ENCODE measurements at regions of chr3 and their contacts with region 1.

Region 1: GRCh38 chr3:47824541-47825473 is 21.9 kb downstream of the DHX30 start:
- DNase-seq: peak; percentile 57
- H3K4me3 ChIP-seq: peak overlapping the region; percentile 89
- H3K27ac ChIP-seq: peak overlapping the region; percentile 52
- H3K27me3 ChIP-seq: no peaks in the 10 kb centered on the region
- CTCF ChIP-seq: peak; percentile 61

Region 2: GRCh38 chr3:47522082-47522987 is 302.5 kb before region 1 on chr3:
- CTCF ChIA-PET with region 1: interaction called, 12 read pairs
- POLR2A ChIA-PET with region 1: no interaction called
- DNase-seq: peak; percentile 82
- H3K4me3 ChIP-seq: no peak overlapping the region
- H3K27ac ChIP-seq: no peak overlapping the region
- H3K27me3 ChIP-seq: peaks cover 2% of the 10 kb centered on the region
- CTCF ChIP-seq: peak; percentile 91

Region 3: DNA sequence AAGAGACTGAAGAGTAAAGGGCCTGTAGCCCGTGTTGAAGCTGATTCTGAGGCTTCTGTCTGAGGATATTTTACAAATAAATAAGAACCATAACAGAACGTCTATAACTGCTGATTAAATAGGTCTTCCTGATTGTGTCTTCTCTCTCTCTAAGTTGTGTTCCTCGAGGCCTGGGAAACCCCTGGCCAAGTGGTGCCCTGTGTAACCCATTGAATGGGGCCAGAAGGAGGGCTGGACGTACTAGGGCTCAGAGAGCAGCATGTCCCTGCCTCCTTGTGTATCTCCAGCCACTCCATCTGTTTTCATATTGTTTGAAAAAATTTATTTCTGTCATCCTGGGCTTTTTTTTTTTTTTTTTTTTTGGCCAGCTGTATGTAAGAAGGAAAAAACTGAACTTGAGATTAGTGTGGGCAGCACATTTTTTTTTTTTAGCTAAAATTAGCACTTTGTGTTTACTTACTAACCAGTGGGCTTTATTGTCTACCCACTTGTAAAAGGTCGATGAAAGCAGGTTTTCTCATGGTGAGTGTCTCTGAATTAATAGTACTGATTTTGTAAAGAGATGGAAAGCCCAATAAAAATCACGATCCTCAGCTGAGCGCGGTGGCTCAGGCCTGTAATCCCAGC is 11.1 kb before region 1 on chr3:
- CTCF ChIA-PET with region 1: interaction called, 40 read pairs
- POLR2A ChIA-PET with region 1: interaction called, 14 read pairs
- DNase-seq: no peak
- H3K4me3 ChIP-seq: no peak overlapping the region
- H3K27ac ChIP-seq: no peak overlapping the region
- H3K27me3 ChIP-seq: no peaks in the 10 kb centered on the region
- CTCF ChIP-seq: no peak

Region 4: GRCh38 chr3:47964740-47965139 is 139.9 kb after region 1 on chr3:
- CTCF ChIA-PET with region 1: interaction called, 10 read pairs
- POLR2A ChIA-PET with region 1: no interaction called
- DNase-seq: no peak
- H3K4me3 ChIP-seq: no peak overlapping the region
- H3K27ac ChIP-seq: no peak overlapping the region
- H3K27me3 ChIP-seq: no peaks in the 10 kb centered on the region
- CTCF ChIP-seq: no peak

Region 5: DNA sequence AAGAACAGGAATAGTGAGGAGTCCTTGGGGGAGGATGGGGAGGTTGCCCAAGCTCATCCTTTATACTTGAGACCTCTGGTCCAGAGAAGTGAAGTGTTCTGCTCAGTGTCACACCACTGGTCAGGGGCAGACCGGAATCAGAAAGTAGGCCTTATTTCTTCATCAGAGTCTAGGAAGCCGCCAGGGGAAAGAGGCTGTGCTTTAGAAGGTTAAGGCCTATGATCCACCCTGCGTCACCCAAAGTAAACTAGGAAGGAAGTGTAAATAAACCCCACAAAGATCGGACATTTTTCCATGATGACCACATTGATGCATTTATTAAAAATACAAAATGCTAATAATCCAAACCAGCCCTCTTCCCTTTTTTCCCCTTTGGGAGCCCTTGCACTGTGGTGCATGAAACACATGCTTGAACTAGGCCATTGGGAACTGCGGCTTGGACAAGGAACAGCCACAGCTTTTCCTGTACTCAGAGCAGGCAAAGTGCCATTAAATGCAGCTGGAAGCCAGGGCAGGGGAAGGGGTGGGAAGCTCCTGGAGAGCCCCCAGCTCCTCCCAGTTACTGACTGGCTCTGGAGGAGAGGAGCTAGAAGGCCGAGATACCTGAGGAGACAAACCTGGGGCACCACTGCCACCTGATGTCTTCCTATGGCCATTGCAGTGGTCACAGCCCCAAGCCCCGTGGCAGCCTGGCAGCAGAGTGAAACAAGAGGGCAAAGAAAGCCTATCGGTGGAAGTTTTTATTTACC is 326.4 kb after region 1 on chr3:
- CTCF ChIA-PET with region 1: interaction called, 15 read pairs
- POLR2A ChIA-PET with region 1: no interaction called
- DNase-seq: peak; percentile 66
- H3K4me3 ChIP-seq: no peak overlapping the region
- H3K27ac ChIP-seq: no peak overlapping the region
- H3K27me3 ChIP-seq: no peaks in the 10 kb centered on the region
- CTCF ChIP-seq: peak; percentile 82

Measured in AG04450 (cell line).